ENCODE measurements at regions of chr4 and their contacts with region 1.

Region 1: DNA sequence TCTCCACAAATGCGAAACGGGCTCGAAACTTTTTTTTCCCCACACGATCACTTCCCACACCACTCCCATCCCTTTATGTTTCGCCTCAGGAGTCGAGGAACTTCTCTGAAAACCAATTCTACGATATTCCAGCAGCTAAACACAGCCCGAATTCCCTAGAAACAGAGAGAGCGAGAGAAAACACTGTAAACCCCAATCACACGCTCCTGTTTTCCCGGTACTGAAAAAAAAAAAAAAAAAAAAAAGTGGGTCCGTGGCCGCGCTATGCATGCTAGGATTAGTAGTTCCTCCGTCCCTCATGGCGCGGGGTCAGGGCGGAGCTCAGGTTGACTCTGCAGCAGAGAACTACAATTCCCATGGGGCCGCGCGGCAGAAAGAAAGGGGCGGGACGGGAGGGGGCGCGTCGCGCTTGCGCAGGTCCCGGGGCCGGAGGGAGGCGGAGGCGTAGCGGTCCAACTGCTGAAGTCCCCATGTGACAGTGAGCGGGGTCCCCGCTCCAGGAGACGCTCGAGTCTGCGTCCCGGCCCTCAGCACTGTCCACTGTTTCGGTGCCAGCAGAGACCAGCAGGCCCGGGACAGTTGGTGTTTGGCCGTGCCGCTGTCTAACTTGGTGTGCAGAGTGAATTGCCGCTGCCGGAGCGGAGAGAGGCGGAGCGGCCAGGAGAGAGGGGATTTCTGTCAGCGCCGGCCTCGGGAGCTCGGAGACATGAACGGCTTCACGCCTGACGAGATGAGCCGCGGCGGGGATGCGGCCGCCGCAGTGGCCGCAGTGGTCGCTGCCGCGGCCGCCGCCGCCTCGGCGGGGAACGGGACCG is at the start of gene SAP30:
- DNase-seq: peak; percentile 100
- H3K4me3 ChIP-seq: peak within 1 kb of the TSS; percentile 74 to 90 (median 88)
- H3K27ac ChIP-seq: peak within 1 kb of the TSS; percentile 89 to 95 (median 93)
- H3K4me1 ChIP-seq: peaks cover 21 to 65% (median 53%) of the 10 kb centered on the region in 4 donors
- H3K27me3 ChIP-seq: no peaks in the 10 kb centered on the region
- CTCF ChIP-seq: no peak
- EP300 ChIP-seq: no peak
- POLR2A ChIP-seq: peak; percentile 98
- total RNA-seq, gene SAP30: 39.6 to 56.2 (median 43.7) TPM

Region 2: DNA sequence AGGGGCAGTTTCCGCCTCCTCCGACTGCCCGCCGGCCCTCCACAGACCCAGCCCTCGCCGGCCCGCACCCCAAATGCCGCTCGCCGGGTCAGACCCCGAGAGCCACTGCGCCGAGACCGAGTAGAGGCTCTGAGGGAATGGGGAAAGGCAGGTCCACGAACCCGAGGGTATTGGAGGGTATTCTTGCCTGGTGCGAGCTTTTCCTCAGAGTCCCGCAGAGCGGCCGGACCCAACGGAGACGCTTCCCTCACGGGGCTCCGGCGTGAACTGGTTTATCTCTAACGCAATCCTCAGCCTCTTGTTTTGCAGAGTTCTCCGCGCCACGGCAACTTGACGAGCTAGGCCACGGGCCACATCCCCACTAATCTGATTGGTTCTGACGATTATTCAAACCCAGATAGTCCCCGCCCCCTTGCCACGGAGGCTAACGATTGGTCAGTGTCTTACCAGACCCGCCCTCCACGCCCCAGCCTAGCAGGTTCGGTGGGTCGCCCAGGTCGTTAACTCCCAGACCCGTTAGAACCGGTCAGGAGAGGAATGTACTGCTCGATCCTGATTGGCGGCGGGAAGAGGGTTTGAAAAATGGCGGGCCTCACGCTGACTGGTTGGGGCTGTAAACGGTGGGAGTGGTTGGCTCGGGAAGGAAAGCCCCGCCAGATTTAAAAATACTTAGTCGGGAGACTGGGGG is 36.5 kb before region 1 on chr4 and contains the start of gene HMGB2:
- intact Hi-C with region 1: loop called (anchors 2 kb)
- DNase-seq: peak; percentile 100
- H3K4me3 ChIP-seq: peak within 1 kb of the TSS; percentile 86 to 95 (median 94)
- H3K27ac ChIP-seq: peak within 1 kb of the TSS; percentile 98 to 100 (median 99)
- H3K4me1 ChIP-seq: peaks cover 14 to 36% (median 36%) of the 10 kb centered on the region in 4 donors
- H3K27me3 ChIP-seq: no peaks in the 10 kb centered on the region
- CTCF ChIP-seq: no peak
- EP300 ChIP-seq: no peak
- POLR2A ChIP-seq: peak; percentile 95
- total RNA-seq, gene HMGB2: 35.7 to 69.7 (median 46.2) TPM

Region 3: DNA sequence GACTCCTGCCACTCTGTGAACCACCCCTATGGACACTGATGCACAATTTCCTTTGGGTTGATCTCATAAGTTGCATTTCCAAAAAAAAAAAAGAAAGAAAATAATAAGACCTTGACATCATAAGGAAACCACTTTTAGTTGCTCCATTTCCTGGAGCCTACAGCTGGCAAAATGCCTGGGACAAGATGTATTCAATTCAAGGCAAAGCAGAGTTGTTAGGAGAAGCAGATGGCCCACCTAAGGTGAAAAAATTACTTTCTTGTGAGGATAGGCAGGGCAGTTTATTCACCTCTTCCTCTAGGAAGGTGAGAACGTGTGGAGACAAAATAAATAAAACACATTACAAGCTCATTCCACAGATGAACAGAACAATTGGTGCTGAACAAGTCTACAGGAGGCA is 42.4 kb after region 1 on chr4:
- intact Hi-C with region 1: loop called (anchors 5 kb)
- DNase-seq: no peak
- H3K4me3 ChIP-seq: no peak overlapping the region
- H3K27ac ChIP-seq: peak overlapping the region in 1 of 4 donors; percentile 1
- H3K4me1 ChIP-seq: peaks cover 3 to 35% (median 21%) of the 10 kb centered on the region in 4 donors
- H3K27me3 ChIP-seq: no peaks in the 10 kb centered on the region
- CTCF ChIP-seq: no peak
- EP300 ChIP-seq: no peak
- POLR2A ChIP-seq: no peak

Region 4: GRCh38 chr4:174553828-174554227 is 1183.1 kb after region 1 on chr4:
- intact Hi-C with region 1: no loop called
- DNase-seq: no peak
- H3K4me3 ChIP-seq: no peak overlapping the region
- H3K27ac ChIP-seq: no peak overlapping the region
- H3K4me1 ChIP-seq: no peaks in the 10 kb centered on the region
- H3K27me3 ChIP-seq: peaks cover 0 to 3% (median 0%) of the 10 kb centered on the region in 4 donors
- CTCF ChIP-seq: no peak
- EP300 ChIP-seq: no peak
- POLR2A ChIP-seq: no peak